ENCODE measurements at regions of chr2 and their contacts with region 1.

Region 1: GRCh38 chr2:142165790-142166189 is 35.0 kb upstream of the LRP1B start:
- DNase-seq: peak; percentile 65
- ATAC-seq: peak; percentile 80
- H3K4me3 ChIP-seq: no peak overlapping the region
- H3K27ac ChIP-seq: no peak overlapping the region
- H3K4me1 ChIP-seq: no peaks in the 10 kb centered on the region
- H3K27me3 ChIP-seq: no peaks in the 10 kb centered on the region
- CTCF ChIP-seq: peak; percentile 57
- POLR2A ChIP-seq: no peak
- RAD21 ChIP-seq: peak; percentile 67

Region 2: GRCh38 chr2:142200062-142200461 is 34.3 kb after region 1 on chr2:
- CTCF ChIA-PET with region 1: no interaction called
- POLR2A ChIA-PET with region 1: no interaction called
- dilution Hi-C with region 1: no loop called
- in situ Hi-C with region 1: no loop called
- intact Hi-C with region 1: no loop called
- DNase-seq: no peak
- ATAC-seq: no peak
- H3K4me3 ChIP-seq: no peak overlapping the region
- H3K27ac ChIP-seq: no peak overlapping the region
- H3K4me1 ChIP-seq: no peaks in the 10 kb centered on the region
- H3K27me3 ChIP-seq: no peaks in the 10 kb centered on the region; the same call in 1 of the 2 replicates
- CTCF ChIP-seq: no peak
- POLR2A ChIP-seq: no peak
- RAD21 ChIP-seq: no peak

Region 3: GRCh38 chr2:142234701-142235100 is 68.9 kb after region 1 on chr2:
- CTCF ChIA-PET with region 1: no interaction called
- POLR2A ChIA-PET with region 1: no interaction called
- dilution Hi-C with region 1: no loop called
- in situ Hi-C with region 1: no loop called
- intact Hi-C with region 1: no loop called
- DNase-seq: no peak
- ATAC-seq: no peak
- H3K4me3 ChIP-seq: no peak overlapping the region
- H3K27ac ChIP-seq: no peak overlapping the region
- H3K4me1 ChIP-seq: no peaks in the 10 kb centered on the region
- H3K27me3 ChIP-seq: no peaks in the 10 kb centered on the region
- CTCF ChIP-seq: no peak
- POLR2A ChIP-seq: no peak
- RAD21 ChIP-seq: no peak

Region 4: GRCh38 chr2:142339261-142339660 is 173.5 kb after region 1 on chr2:
- CTCF ChIA-PET with region 1: no interaction called
- POLR2A ChIA-PET with region 1: no interaction called
- dilution Hi-C with region 1: no loop called
- in situ Hi-C with region 1: no loop called
- intact Hi-C with region 1: no loop called
- DNase-seq: no peak
- ATAC-seq: no peak
- H3K4me3 ChIP-seq: no peak overlapping the region
- H3K27ac ChIP-seq: no peak overlapping the region
- H3K4me1 ChIP-seq: no peaks in the 10 kb centered on the region
- H3K27me3 ChIP-seq: no peaks in the 10 kb centered on the region
- CTCF ChIP-seq: no peak
- POLR2A ChIP-seq: no peak
- RAD21 ChIP-seq: no peak

Region 5: DNA sequence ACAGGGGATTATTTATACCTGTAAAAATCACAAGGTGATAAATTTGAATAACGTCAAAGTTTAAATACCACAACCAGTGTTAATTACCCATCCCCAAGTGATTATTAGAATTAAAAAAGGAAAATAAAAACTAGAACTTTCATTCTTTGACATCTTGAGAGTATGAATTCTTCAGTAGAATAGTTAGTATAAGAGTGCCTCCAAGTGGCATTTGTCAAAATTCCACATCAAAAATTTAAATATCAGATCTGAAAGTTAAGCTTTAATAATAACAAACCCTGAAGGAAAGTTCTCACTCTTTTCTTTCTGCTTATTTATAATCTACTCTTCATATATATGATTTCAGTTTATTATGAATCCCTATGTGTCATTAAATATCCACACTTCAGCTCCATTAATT is 438.0 kb after region 1 on chr2:
- CTCF ChIA-PET with region 1: interaction called, 3 read pairs
- POLR2A ChIA-PET with region 1: no interaction called
- dilution Hi-C with region 1: no loop called
- in situ Hi-C with region 1: no loop called
- intact Hi-C with region 1: loop called (anchors 10 kb)
- DNase-seq: no peak
- ATAC-seq: no peak
- H3K4me3 ChIP-seq: no peak overlapping the region
- H3K27ac ChIP-seq: no peak overlapping the region
- H3K4me1 ChIP-seq: peaks cover under 1% of the 10 kb centered on the region; the same call in 1 of the 2 replicates
- H3K27me3 ChIP-seq: no peaks in the 10 kb centered on the region
- CTCF ChIP-seq: peak; percentile 42
- POLR2A ChIP-seq: no peak
- RAD21 ChIP-seq: peak; percentile 48

Region 6: GRCh38 chr2:142642654-142643053 is 476.9 kb after region 1 on chr2:
- CTCF ChIA-PET with region 1: no interaction called
- POLR2A ChIA-PET with region 1: no interaction called
- dilution Hi-C with region 1: no loop called
- in situ Hi-C with region 1: no loop called
- intact Hi-C with region 1: loop called (anchors 1 kb)
- DNase-seq: no peak
- ATAC-seq: no peak
- H3K4me3 ChIP-seq: no peak overlapping the region
- H3K27ac ChIP-seq: no peak overlapping the region
- H3K4me1 ChIP-seq: no peaks in the 10 kb centered on the region
- H3K27me3 ChIP-seq: no peaks in the 10 kb centered on the region
- CTCF ChIP-seq: no peak
- POLR2A ChIP-seq: no peak
- RAD21 ChIP-seq: no peak

Region 7: DNA sequence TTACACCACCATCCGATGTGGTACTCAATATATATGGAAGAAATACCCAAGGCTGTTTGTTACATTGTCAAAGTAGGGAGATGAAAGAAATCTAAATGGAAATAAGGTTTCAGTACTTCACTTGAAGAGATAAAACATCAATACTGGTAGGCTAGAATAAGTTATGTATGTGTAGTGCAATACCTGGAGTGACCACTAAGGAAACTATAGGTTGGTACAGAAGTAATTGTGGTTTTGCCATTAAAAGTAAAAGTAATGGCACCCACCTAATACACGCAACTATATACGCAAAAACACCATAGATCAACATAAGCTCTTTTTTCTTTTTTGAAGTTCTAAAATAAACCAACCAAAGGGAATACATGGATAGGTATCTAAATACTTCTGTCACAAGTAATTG is 568.4 kb after region 1 on chr2:
- CTCF ChIA-PET with region 1: no interaction called
- POLR2A ChIA-PET with region 1: no interaction called
- dilution Hi-C with region 1: no loop called
- in situ Hi-C with region 1: no loop called
- intact Hi-C with region 1: no loop called
- DNase-seq: no peak
- ATAC-seq: no peak
- H3K4me3 ChIP-seq: no peak overlapping the region
- H3K27ac ChIP-seq: no peak overlapping the region
- H3K4me1 ChIP-seq: 0 out of 2 replicates have a peak, but pooled peaks cover 2% of the 10 kb centered on the region
- H3K27me3 ChIP-seq: no peaks in the 10 kb centered on the region
- CTCF ChIP-seq: 0 out of 2 replicates have a peak, but pooled peaks have one; percentile 11
- POLR2A ChIP-seq: no peak
- RAD21 ChIP-seq: no peak

Measured in IMR-90 (cell line).